BJ (cell line): ENCODE measurements at regions of chr6 and their contacts with region 1.

Region 1: DNA sequence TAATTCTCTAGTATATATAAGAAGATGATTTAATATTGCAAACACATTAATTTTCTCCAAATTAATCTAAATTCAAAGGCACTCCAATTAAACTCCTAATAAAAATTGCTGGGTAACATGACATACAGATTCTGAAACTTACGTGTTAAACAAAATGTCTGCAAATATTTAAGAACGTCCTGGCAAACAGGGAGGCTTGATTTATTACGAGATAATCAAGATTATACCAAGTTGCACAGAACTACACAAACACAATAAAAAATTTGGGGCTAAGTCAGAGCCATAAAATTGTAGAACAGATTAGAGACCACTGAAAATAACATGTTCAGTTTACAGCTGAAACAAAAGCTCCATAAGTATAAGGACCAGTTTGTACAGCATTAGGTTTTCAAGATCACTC is 166.4 kb downstream of the RNGTT start:
- DNase-seq: no peak
- H3K4me3 ChIP-seq: no peak overlapping the region
- H3K27me3 ChIP-seq: no peaks in the 10 kb centered on the region
- CTCF ChIP-seq: no peak

Region 2: GRCh38 chr6:88311561-88311960 is 485.4 kb before region 1 on chr6:
- CTCF ChIA-PET with region 1: no interaction called
- POLR2A ChIA-PET with region 1: no interaction called
- DNase-seq: no peak
- H3K4me3 ChIP-seq: no peak overlapping the region
- H3K27me3 ChIP-seq: no peaks in the 10 kb centered on the region
- CTCF ChIP-seq: no peak

Region 3: DNA sequence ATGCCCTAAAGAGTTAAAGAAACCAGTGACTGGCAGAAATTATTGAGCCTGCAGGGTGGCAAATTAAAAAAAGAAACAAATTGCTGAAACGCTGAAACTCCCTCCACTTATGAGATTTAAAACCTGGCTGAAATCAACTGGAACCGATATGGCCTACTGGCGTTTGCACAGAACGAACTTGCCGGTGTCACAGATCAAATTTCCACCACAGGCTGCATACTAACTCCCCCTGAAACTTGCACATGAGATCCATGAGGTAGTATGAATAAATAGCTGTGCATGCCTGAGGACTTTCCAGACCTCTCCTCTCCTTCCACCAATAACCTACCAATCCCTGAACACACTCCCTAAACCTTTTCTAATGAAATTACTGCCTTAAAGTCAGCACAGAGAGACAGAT is 16.1 kb after region 1 on chr6:
- CTCF ChIA-PET with region 1: no interaction called
- POLR2A ChIA-PET with region 1: interaction called, 11 read pairs
- DNase-seq: no peak
- H3K4me3 ChIP-seq: no peak overlapping the region
- H3K27me3 ChIP-seq: no peaks in the 10 kb centered on the region
- CTCF ChIP-seq: no peak